Activated T-helper 2 cell treated with anti-CD3 and anti-CD28 coated beads, Interferon-gamma antibody, Interleukin-2, Interleukin-4, amounts not matched to agents 10 μg/mL and 5 μg/mL and 100 μg/mL, durations not matched to agents 14 hours and 24 hours and 36 hours (primary cell): ENCODE measurements at regions of chr7 and their contacts with region 1.

Region 1: GRCh38 chr7:38908759-38909335 is at the start of gene VPS41:
- DNase-seq: peak; percentile 72
- H3K4me3 Mint-ChIP-seq: peak within 1 kb of the TSS; percentile 92
- H3K27ac Mint-ChIP-seq: peak within 1 kb of the TSS; percentile 90
- H3K4me1 Mint-ChIP-seq: peaks cover 32% of the 10 kb centered on the region
- H3K27me3 Mint-ChIP-seq: peaks cover 8% of the 10 kb centered on the region
- total RNA-seq, gene VPS41: 59.9 and 63.6 TPM in 2 replicates

Region 2: DNA sequence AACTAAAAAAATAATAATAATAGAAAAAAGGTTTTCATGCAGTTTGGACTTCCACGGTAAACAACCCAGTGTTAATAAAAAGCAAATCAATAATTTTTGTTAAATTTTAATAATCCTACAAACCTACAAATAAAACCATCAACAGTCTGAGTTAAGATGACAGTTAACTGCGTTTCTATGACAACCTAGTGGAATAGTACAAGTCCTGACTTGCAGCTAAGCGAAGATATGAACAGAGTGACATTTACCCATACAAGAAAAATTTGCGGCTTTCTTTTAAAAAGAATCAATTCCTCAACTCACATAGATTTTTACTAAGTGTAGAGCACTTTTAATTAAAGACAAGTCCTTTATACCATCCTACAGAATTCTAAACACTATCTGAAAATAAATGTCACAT is 35.4 kb before region 1 on chr7:
- intact Hi-C with region 1: no loop called
- DNase-seq: no peak
- H3K4me3 Mint-ChIP-seq: no peak overlapping the region
- H3K27ac Mint-ChIP-seq: no peak overlapping the region
- H3K4me1 Mint-ChIP-seq: peaks cover 3% of the 10 kb centered on the region
- H3K27me3 Mint-ChIP-seq: no peaks in the 10 kb centered on the region

Region 3: DNA sequence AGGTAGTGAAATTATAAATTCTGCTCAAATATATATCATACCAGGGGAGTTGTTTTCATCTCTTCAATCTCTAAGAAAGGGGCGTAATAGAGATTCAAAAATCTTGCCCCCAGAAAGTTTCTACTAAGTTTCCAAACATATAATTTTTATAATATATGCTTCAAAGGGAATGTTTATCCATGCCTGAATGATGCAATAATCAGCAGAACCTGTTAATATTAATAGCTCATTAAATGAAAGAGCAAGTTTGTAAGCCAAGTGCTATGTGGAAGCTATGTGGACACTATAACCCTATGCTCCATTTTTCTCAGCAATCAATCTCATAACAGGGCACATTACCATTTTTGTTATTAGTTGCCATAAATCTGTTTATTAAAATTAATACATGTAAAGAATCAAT is 25.1 kb before region 1 on chr7:
- intact Hi-C with region 1: loop called (anchors 1 kb)
- DNase-seq: no peak
- H3K4me3 Mint-ChIP-seq: no peak overlapping the region
- H3K27ac Mint-ChIP-seq: no peak overlapping the region
- H3K4me1 Mint-ChIP-seq: peaks cover 28% of the 10 kb centered on the region
- H3K27me3 Mint-ChIP-seq: no peaks in the 10 kb centered on the region

Region 4: DNA sequence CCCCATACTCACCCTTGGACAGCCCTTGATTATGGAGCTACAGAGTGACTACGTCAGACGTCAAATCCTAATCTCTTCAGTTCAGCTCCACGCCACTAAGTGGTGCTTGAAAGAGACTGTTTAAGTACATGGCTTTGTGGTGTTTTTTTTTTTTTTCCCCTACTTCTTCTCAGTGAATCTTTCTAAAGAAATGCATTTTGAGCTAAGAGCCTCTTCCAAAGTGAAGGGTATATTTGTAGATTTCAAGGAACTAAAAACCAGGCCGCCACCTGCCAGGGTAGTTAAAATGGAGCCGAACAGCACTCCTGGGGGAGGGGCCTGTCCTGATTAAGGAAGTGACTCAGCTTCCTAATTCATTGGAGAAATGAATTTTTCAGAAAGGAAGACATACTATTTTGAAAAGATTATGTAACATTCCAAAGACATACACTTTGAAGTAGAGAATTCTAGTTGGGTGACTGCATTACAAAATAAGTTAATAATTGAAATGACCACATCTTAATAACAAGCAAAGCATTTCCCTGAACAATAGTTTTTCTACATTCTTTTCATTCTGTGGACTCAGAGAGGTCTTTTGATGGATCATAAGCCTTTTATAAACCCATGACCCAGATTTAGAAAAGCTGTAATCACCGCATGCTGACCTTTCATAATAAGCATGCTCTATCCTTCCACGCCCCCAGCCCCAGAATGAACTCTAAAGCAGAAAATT is 20.8 kb after region 1 on chr7:
- intact Hi-C with region 1: no loop called
- DNase-seq: no peak
- H3K4me3 Mint-ChIP-seq: no peak overlapping the region
- H3K27ac Mint-ChIP-seq: no peak overlapping the region
- H3K4me1 Mint-ChIP-seq: peaks cover 2% of the 10 kb centered on the region
- H3K27me3 Mint-ChIP-seq: peaks cover 3% of the 10 kb centered on the region